HCT116 (cell line): ENCODE measurements at regions of chr16 and their contacts with region 1.

Region 1: DNA sequence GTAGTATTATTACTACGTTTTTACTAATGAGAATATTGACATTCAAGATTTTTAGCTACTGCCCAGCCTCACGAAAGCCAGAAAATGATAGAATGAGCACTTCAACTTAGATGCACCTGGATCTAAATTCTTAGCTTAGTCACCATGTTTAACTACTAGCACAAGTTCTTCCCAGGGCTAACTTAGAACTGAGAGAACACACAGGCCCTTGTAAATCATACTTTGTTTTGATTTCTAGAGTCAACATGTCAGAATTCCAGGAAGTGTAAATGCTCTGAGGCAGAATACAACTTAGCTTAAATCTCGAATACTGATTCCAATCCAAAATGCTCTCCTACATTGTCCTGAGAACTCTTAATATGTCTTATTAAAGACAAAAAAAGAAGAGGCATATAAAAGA is 6.8 kb upstream of the ACSM1 start:
- DNase-seq: no peak
- ATAC-seq: no peak
- H3K4me3 ChIP-seq: no peak overlapping the region
- H3K27ac ChIP-seq: no peak overlapping the region
- H3K4me1 ChIP-seq: no peaks in the 10 kb centered on the region
- H3K27me3 ChIP-seq: peaks cover 15% of the 10 kb centered on the region
- CTCF ChIP-seq: no peak
- POLR2A ChIP-seq: no peak
- RAD21 ChIP-seq: no peak

Region 2: DNA sequence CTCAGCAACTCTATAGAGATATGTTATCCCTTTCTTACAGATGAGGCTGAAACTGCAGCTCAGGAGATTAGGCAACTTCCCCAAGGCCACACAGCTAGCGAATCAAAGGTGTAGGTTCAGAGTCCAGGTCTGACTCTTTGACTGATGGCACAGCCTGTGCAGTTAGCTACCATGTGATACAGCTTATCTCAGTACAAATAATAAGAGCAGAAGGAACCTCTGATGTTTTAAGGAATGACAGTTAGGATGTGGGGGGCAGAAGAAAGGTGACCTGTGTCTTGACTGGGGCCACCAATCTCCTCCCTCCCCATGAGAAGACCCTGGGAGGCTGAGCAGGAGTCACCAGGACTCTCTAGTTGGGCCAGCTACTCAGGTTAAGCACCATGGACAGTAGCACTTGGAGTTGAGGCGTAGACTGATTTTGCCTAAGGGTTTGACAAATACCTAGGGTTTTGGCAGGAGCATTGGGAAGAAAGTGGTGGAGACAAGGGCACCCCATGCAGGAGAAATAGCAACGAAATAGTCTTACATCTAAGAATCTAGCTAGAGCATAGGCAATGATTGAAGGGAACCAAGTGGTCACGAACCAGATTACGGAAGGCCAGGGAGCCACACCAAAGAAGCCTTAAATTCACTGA is 105.3 kb before region 1 on chr16:
- CTCF ChIA-PET with region 1: no interaction called
- POLR2A ChIA-PET with region 1: no interaction called
- RAD21 ChIA-PET with region 1: no interaction called
- intact Hi-C with region 1: loop called (anchors 5 kb)
- DNase-seq: no peak
- ATAC-seq: no peak
- H3K4me3 ChIP-seq: no peak overlapping the region
- H3K27ac ChIP-seq: no peak overlapping the region
- H3K4me1 ChIP-seq: no peaks in the 10 kb centered on the region
- H3K27me3 ChIP-seq: 0 out of 2 replicates have a peak, but pooled peaks cover 2% of the 10 kb centered on the region
- CTCF ChIP-seq: no peak
- POLR2A ChIP-seq: no peak
- RAD21 ChIP-seq: no peak

Region 3: GRCh38 chr16:20806168-20807050 is 102.1 kb after region 1 on chr16 and contains the starts of genes ERI2 and REXO5:
- CTCF ChIA-PET with region 1: no interaction called
- POLR2A ChIA-PET with region 1: no interaction called
- RAD21 ChIA-PET with region 1: no interaction called
- intact Hi-C with region 1: no loop called
- DNase-seq: peak; percentile 91
- ATAC-seq: peak; percentile 84
- H3K4me3 ChIP-seq: peak within 1 kb of the TSS; percentile 92 to 95
- H3K27ac ChIP-seq: peak within 1 kb of the TSS; percentile 90
- H3K4me1 ChIP-seq: peaks cover 8 to 16% of the 10 kb centered on the region in 2 experiments
- H3K27me3 ChIP-seq: no peaks in the 10 kb centered on the region
- CTCF ChIP-seq: peak; percentile 32 to 45 (median 44); a peak in 5 of 6 replicates
- POLR2A ChIP-seq: peak; percentile 95
- RAD21 ChIP-seq: no peak
- total RNA-seq, gene ERI2: 42.1 TPM
- total RNA-seq, gene REXO5: 10.5 TPM